Endothelial cell of umbilical vein (primary cell): ENCODE measurements at regions of chr15 and their contacts with region 1.

Region 1: GRCh38 chr15:89206908-89207331 is 14.5 kb downstream of the RLBP1 start:
- DNase-seq: peak; percentile 73
- H3K4me3 ChIP-seq: no peak overlapping the region
- H3K27ac ChIP-seq: no peak overlapping the region
- H3K4me1 ChIP-seq: peaks cover 2% of the 10 kb centered on the region
- H3K27me3 ChIP-seq: no peaks in the 10 kb centered on the region
- CTCF ChIP-seq: peak; percentile 96 to 100
- POLR2A ChIP-seq: no peak

Region 2: GRCh38 chr15:88982304-88982945 is 224.5 kb before region 1 on chr15:
- CTCF ChIA-PET with region 1: no interaction called
- POLR2A ChIA-PET with region 1: no interaction called
- dilution Hi-C with region 1: no loop called
- intact Hi-C with region 1: no loop called
- DNase-seq: no peak
- H3K4me3 ChIP-seq: no peak overlapping the region
- H3K27ac ChIP-seq: no peak overlapping the region
- H3K4me1 ChIP-seq: no peaks in the 10 kb centered on the region
- H3K27me3 ChIP-seq: no peaks in the 10 kb centered on the region
- CTCF ChIP-seq: no peak
- POLR2A ChIP-seq: no peak

Region 3: DNA sequence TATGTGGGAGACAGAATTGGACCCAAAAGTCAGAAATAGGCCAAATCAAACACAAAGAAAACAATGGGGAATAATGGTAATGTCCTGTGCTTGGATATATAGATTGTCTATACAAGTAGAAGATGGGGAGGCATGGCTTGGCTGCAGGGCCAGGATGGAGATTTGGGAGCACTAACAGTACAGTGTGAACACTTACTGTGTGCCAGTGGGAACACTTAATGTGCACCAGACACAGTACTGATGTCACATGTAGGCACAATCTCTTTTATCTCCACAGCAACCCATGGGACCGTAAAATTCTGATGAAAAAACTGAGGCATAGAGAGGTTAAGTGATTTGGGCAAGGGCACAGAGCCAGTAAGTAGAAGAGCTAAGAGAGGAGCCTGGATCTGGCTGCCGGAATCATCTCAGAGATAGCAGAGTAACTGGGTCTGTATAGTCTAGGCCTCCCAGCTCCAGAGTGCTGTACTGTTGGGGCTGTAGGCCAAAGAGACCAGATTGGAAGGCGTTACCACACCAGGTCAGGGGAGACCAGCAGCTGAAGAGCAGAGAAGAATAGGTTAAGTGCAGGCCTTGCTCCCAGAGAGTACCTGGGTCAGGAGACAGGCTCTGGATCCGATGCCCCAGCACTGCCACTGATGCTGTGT is 48.9 kb before region 1 on chr15:
- CTCF ChIA-PET with region 1: no interaction called
- POLR2A ChIA-PET with region 1: no interaction called
- dilution Hi-C with region 1: no loop called
- intact Hi-C with region 1: no loop called
- DNase-seq: no peak
- H3K4me3 ChIP-seq: no peak overlapping the region
- H3K27ac ChIP-seq: no peak overlapping the region
- H3K4me1 ChIP-seq: no peaks in the 10 kb centered on the region
- H3K27me3 ChIP-seq: no peaks in the 10 kb centered on the region
- CTCF ChIP-seq: no peak
- POLR2A ChIP-seq: no peak

Region 4: DNA sequence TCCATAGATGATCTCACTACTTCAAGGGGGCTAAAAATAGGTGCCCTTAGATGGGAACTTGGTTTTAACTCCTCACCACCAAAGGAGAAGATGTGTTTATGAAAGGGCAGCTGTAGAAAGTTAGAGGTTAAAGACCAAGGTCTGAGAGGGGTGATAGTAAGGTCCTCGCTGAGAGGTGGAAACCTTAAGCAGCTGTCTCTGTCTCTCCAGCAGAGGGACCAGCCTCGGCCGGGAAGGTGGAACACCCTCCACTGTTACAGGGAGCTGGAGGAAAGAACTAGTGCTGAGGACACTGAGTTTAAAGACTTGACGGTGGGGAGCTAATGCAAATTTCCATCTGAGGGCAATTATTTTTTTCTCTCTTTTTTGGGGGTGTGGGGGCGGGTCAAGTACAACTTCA is 23.4 kb after region 1 on chr15:
- CTCF ChIA-PET with region 1: interaction called, 38 read pairs
- POLR2A ChIA-PET with region 1: no interaction called
- dilution Hi-C with region 1: no loop called
- intact Hi-C with region 1: no loop called
- DNase-seq: no peak
- H3K4me3 ChIP-seq: no peak overlapping the region
- H3K27ac ChIP-seq: no peak overlapping the region
- H3K4me1 ChIP-seq: no peaks in the 10 kb centered on the region
- H3K27me3 ChIP-seq: peaks cover under 1 to 3% of the 10 kb centered on the region in 2 experiments
- CTCF ChIP-seq: no peak
- POLR2A ChIP-seq: no peak

Region 5: GRCh38 chr15:89278307-89278706 is 71.4 kb after region 1 on chr15:
- CTCF ChIA-PET with region 1: interaction called, 17 read pairs
- POLR2A ChIA-PET with region 1: no interaction called
- dilution Hi-C with region 1: no loop called
- intact Hi-C with region 1: no loop called
- DNase-seq: no peak
- H3K4me3 ChIP-seq: no peak overlapping the region
- H3K27ac ChIP-seq: no peak overlapping the region
- H3K4me1 ChIP-seq: no peaks in the 10 kb centered on the region
- H3K27me3 ChIP-seq: no peaks in the 10 kb centered on the region
- CTCF ChIP-seq: no peak
- POLR2A ChIP-seq: no peak

Region 6: DNA sequence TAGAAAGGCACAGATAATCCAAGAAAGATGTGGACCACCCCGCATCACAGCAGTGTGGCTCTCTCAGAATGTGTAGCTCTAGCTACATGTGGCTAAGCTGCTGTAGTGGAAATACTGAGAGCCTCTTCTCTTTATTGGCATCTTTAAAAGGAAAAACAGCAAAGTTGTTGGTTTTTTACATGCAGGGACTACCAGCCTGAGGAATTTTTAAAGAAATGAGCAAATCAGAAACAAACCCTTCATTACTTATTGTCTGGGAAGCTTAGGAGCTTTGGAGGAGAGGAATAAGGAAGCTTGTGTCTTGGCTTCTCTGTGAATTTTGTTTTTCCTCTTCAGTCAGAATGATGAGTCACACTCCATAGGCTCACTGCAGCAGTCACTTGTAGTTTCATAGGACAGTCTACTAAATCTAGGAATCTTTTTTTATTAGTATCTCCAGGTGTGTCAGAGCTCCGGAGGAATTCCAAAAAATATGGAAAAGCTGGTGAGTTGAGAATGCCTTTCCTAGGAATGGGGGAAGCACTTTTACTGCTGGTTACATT is 100.2 kb after region 1 on chr15:
- CTCF ChIA-PET with region 1: interaction called, 104 read pairs
- POLR2A ChIA-PET with region 1: interaction called, 3 read pairs
- dilution Hi-C with region 1: no loop called
- intact Hi-C with region 1: no loop called
- DNase-seq: peak; percentile 52
- H3K4me3 ChIP-seq: no peak overlapping the region
- H3K27ac ChIP-seq: no peak overlapping the region
- H3K4me1 ChIP-seq: peaks cover 6% of the 10 kb centered on the region
- H3K27me3 ChIP-seq: no peaks in the 10 kb centered on the region
- CTCF ChIP-seq: no peak
- POLR2A ChIP-seq: no peak

Region 7: GRCh38 chr15:89385927-89386331 is 179.0 kb after region 1 on chr15:
- CTCF ChIA-PET with region 1: no interaction called
- POLR2A ChIA-PET with region 1: no interaction called
- dilution Hi-C with region 1: no loop called
- intact Hi-C with region 1: no loop called
- DNase-seq: no peak
- H3K4me3 ChIP-seq: no peak overlapping the region
- H3K27ac ChIP-seq: no peak overlapping the region
- H3K4me1 ChIP-seq: no peaks in the 10 kb centered on the region
- H3K27me3 ChIP-seq: peaks cover 50 to 62% of the 10 kb centered on the region in 2 experiments
- CTCF ChIP-seq: no peak
- POLR2A ChIP-seq: no peak

Region 8: GRCh38 chr15:89472785-89473256 is 265.9 kb after region 1 on chr15:
- CTCF ChIA-PET with region 1: interaction called, 21 read pairs
- POLR2A ChIA-PET with region 1: no interaction called
- dilution Hi-C with region 1: no loop called
- intact Hi-C with region 1: loop called (anchors 1 kb)
- DNase-seq: peak; percentile 67
- H3K4me3 ChIP-seq: no peak overlapping the region
- H3K27ac ChIP-seq: no peak overlapping the region
- H3K4me1 ChIP-seq: no peaks in the 10 kb centered on the region
- H3K27me3 ChIP-seq: peaks cover 13 to 19% of the 10 kb centered on the region in 2 experiments
- CTCF ChIP-seq: peak; percentile 81 to 93
- POLR2A ChIP-seq: no peak

Region 9: GRCh38 chr15:89514596-89515406 is 307.9 kb after region 1 on chr15:
- CTCF ChIA-PET with region 1: no interaction called
- POLR2A ChIA-PET with region 1: no interaction called
- dilution Hi-C with region 1: no loop called
- intact Hi-C with region 1: no loop called
- DNase-seq: no peak
- H3K4me3 ChIP-seq: no peak overlapping the region
- H3K27ac ChIP-seq: no peak overlapping the region
- H3K4me1 ChIP-seq: no peaks in the 10 kb centered on the region
- H3K27me3 ChIP-seq: peaks cover 6 to 20% of the 10 kb centered on the region in 2 experiments
- CTCF ChIP-seq: no peak
- POLR2A ChIP-seq: no peak